Stomach (tissue), 19 donors: ENCODE measurements at regions of chr3 and their contacts with region 1.

Region 1: DNA sequence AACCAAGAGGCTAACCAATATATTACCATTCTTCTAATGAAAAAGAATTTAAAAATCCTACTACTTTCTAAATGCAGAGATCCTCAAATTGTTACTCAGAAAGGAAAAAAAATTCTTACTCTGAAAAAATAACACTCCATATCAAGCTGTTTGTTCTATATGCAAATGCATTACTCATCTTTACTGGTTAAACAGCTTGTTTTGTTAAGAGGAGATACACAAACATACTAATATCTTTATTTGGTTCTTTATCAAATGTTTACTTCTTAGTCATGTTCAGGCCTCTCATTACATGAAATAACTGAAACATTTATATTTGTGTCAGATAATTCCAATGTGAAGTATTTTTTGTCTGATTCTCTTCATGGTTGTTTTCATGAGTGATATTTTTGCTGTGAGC is 146.8 kb downstream of the PCCB start:
- DNase-seq: no peak
- H3K4me3 ChIP-seq: no peak overlapping the region
- H3K27ac ChIP-seq: no peak overlapping the region
- H3K4me1 ChIP-seq: peaks cover 0 to 6% (median 0%) of the 10 kb centered on the region in 4 donors
- H3K27me3 ChIP-seq: no peaks in the 10 kb centered on the region
- CTCF ChIP-seq: no peak
- EP300 ChIP-seq: no peak
- POLR2A ChIP-seq: no peak

Region 2: DNA sequence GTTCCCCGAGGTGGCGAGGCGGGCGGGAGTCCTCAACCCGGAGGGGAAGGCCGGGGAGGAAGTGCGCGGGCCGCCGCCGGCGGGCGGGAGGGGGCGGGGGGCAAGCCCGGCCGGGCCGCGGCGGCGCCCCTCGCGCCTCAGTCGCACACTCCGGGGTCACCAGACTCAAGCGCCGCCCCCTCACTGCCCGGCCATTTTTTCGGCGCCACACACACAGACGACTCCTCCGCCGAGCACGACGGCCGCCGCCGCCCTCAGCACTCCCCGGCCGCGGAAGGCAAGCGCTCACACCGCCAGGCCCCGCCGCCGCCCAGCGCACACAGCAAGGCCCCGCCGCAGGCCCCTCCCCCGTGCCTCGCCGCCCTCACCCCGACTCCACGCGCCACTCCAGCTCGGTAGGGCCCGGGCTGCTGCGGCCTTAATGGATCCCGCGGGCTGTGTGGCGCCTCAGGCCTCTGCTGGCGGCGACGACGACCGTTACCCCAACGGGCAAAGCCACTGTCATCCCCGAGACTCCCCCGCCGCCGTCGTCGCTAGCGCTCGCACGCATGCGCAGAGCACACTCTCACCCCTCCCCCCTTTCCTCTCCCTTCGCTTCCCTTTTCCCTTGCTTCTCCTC is 201.0 kb before region 1 on chr3 and contains the start of gene MSL2:
- intact Hi-C with region 1: no loop called
- DNase-seq: peak; percentile 72 to 95
- H3K4me3 ChIP-seq: peak within 1 kb of the TSS; percentile 73 to 93 (median 84)
- H3K27ac ChIP-seq: peak within 1 kb of the TSS; percentile 99 to 100 (median 100)
- H3K4me1 ChIP-seq: peaks cover 17 to 45% (median 34%) of the 10 kb centered on the region in 4 donors
- H3K27me3 ChIP-seq: no peaks in the 10 kb centered on the region
- CTCF ChIP-seq: no peak
- EP300 ChIP-seq: no peak
- POLR2A ChIP-seq: peak in 2 of 4 donors; percentile 12 to 70
- total RNA-seq, gene MSL2: 12.3 to 55.4 (median 28.0) TPM

Region 3: GRCh38 chr3:136752422-136753325 is 355.8 kb after region 1 on chr3:
- intact Hi-C with region 1: loop called (anchors 10 kb)
- DNase-seq: peak; percentile 99 to 100
- H3K4me3 ChIP-seq: peak overlapping the region; percentile 67 to 92 (median 82)
- H3K27ac ChIP-seq: peak overlapping the region; percentile 95 to 100 (median 99)
- H3K4me1 ChIP-seq: peaks cover 21 to 48% (median 38%) of the 10 kb centered on the region in 4 donors
- H3K27me3 ChIP-seq: no peaks in the 10 kb centered on the region
- CTCF ChIP-seq: peak in 3 of 7 experiments; percentile 20 to 94 (median 85)
- EP300 ChIP-seq: no peak
- POLR2A ChIP-seq: peak in 2 of 4 donors; percentile 19 to 71